Left cardiac atrium (tissue), 4 donors: ENCODE measurements at regions of chr1 and their contacts with region 1.

Region 1: DNA sequence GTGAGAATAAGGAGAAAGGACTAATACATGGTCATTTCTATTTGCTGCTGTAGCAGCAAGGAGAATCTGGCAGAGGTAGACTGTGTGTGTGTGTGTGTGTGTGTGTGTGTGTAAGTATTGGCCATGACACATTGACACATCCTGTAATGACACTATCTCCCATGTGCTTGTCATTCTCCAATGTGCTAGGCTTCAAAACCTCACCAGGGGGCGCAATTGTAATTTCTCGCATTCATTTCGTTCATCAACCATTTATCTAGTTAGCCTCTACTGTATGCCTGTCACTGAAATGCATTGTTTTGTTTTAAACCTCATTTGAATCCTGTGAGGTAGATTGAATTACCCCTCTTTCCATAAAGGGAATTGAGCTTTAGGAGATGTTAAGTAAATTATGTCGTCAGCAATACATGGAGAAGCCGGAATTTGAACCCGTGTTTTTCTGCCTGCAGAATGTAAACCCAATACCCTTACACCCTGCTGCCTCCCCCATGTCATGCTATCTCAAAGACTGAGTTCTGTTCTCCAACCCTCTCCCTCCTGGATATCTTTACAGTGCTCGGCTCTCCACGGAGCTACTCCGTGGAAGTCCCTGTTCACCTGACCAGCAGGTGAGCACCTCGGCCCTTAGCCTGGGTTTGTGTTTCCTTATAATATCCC is 100.8 kb downstream of the UCK2 start:
- DNase-seq: no peak
- ATAC-seq: peak in 1 of 2 donors; percentile 27

Region 2: DNA sequence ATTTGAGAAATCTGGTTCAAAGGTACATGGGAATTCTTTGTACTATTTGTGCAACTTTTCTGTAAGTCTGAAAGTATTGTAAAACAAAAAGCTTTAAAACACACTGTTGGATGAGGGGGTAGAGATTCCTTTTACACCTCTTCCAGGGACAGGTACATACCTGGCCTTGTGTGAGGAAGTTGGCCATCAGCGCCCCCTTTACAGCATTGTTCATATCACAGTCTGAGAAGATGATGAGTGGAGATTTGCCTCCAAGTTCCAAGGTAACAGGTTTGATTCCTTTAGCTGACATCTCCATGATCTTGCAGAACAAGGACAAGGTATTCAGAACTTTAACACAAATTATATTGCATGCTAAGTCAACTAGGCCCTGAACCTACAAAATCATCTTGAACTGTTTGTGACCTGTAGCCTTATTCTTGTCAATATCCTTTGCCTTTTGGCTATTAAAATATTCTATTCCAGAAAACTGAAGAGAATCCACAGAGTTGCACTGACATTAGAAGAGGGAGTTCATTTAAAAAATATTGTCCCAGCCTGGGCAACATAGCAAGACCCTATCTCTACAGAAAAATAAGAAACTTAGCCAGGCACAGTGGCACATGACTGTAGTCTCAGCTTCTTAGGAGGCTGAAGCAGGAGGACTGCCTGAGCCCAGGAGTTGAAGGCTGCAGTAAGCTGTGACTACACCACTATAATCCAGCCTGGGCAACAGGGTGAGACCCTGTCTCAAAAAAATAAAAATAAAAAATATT is 248.7 kb before region 1 on chr1:
- intact Hi-C with region 1: no loop called
- DNase-seq: no peak
- ATAC-seq: no peak

Region 3: GRCh38 chr1:166166695-166167571 is 238.7 kb after region 1 on chr1 and contains the start of gene FAM78B:
- intact Hi-C with region 1: loop called in 1 of 2 experiments (anchors 2 kb)
- DNase-seq: peak; percentile 83
- ATAC-seq: peak; percentile 93 to 95
- total RNA-seq, gene FAM78B: 6.0 to 11.9 TPM

Region 4: GRCh38 chr1:166479052-166479631 is 550.9 kb after region 1 on chr1:
- intact Hi-C with region 1: loop called in 1 of 2 experiments (anchors 2 kb)
- DNase-seq: peak; percentile 43
- ATAC-seq: no peak